Aorta (tissue), 5 donors: ENCODE measurements at regions of chr17 and their contacts with region 1.

Region 1: GRCh38 chr17:74430706-74431567 is 951 bp upstream of the GPRC5C start:
- DNase-seq: peak; percentile 89 to 94
- ATAC-seq: peak; percentile 86
- H3K4me3 ChIP-seq: peak overlapping the region; percentile 54 to 84
- H3K27ac ChIP-seq: peak overlapping the region; percentile 73 to 91
- H3K4me1 ChIP-seq: no peaks in the 10 kb centered on the region
- H3K27me3 ChIP-seq: no peaks in the 10 kb centered on the region

Region 2: GRCh38 chr17:74379495-74380085 is 51.3 kb before region 1 on chr17:
- intact Hi-C with region 1: loop called (anchors 5 kb)
- DNase-seq: peak; percentile 95 to 99
- ATAC-seq: peak; percentile 94
- H3K4me3 ChIP-seq: no peak overlapping the region
- H3K27ac ChIP-seq: peak overlapping the region in 1 of 2 donors; percentile 12
- H3K4me1 ChIP-seq: no peaks in the 10 kb centered on the region
- H3K27me3 ChIP-seq: no peaks in the 10 kb centered on the region

Region 3: DNA sequence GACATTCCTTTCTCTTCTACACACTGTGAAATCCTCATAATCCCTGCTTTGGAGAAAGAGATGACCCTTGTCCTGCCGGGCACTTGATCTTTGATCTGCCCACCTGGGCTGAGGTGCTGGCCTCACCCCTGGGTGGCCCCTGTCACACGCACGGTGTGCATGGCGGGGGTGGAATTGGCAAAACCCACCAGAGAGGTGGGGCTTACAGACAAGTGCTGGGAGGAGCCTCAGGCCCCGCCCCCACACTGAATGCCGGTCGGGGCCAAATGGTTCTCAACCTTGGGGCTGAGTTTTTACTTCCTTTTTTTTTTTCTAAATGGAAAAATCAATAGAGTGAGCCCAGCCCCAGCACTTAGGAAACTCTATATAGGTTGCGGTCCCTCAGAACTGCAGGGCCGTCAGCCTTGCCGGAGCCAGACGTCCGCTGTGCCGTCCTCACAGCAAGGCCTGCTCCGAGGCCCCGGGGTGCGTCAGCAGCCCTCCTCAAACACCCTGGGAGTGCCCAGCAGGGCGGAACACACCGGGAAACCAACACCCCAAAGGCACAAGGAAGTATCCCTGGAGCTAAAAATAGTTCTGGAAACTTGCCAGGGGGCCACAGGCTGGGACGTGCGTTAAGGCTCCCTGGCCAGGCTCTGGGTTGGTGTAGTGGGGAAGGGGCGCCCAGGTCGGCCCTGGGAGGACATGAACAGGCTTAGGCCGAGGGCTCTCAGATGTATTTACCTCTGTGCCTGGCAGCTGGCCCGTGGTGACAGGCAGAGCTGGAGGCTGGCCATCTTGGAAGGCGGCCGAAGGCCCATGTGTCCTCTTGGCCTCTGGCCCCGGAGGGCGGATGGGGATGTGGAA is 12.0 kb after region 1 on chr17:
- intact Hi-C with region 1: loop called in 1 of 2 experiments (anchors 2 kb)
- DNase-seq: peak; percentile 90 to 93
- ATAC-seq: peak; percentile 64
- H3K4me3 ChIP-seq: no peak overlapping the region
- H3K27ac ChIP-seq: peak overlapping the region; percentile 35 to 60
- H3K4me1 ChIP-seq: peaks cover 0 to 1% of the 10 kb centered on the region in 2 donors
- H3K27me3 ChIP-seq: no peaks in the 10 kb centered on the region

Region 4: DNA sequence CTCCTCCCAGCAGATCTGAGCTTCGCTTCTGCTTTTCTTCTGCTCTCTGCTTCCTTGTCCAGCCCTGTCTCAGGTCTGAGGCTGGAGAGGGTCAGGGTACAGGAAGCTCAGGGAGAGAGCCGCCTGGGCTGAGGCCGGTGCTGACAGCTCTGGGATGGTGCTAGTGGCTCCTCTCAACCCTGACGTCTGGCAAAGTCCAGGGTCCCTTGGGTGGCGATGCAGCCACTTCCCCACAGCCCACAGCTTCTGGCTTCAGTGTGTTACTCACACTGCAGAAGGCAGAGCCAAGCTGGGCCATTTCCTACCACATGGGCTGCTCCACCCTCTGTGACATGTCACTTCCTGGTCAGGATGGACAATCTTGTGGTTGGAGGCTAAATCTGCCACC is 114.9 kb after region 1 on chr17 and contains the start of gene CD300C:
- intact Hi-C with region 1: no loop called
- DNase-seq: peak in 1 of 2 donors; percentile 78
- ATAC-seq: no peak
- H3K4me3 ChIP-seq: no peak within 1 kb of the TSS
- H3K27ac ChIP-seq: no peak within 1 kb of the TSS
- H3K4me1 ChIP-seq: no peaks in the 10 kb centered on the region
- H3K27me3 ChIP-seq: no peaks in the 10 kb centered on the region
- total RNA-seq, gene CD300C: 2.2 to 2.9 TPM